ENCODE measurements at regions of chr3 and their contacts with region 1.

Region 1: GRCh38 chr3:156535162-156535627 is 19.7 kb downstream of the SSR3 start:
- DNase-seq: peak; percentile 94
- H3K4me3 ChIP-seq: no peak overlapping the region
- H3K27ac ChIP-seq: peak overlapping the region; percentile 71 to 93 (median 85)
- H3K4me1 ChIP-seq: peaks cover 0 to 85% (median 61%) of the 10 kb centered on the region in 4 donors
- H3K27me3 ChIP-seq: no peaks in the 10 kb centered on the region
- CTCF ChIP-seq: no peak
- EP300 ChIP-seq: peak in 3 of 4 donors; percentile 42 to 77 (median 61)
- POLR2A ChIP-seq: no peak

Region 2: GRCh38 chr3:157136647-157137387 is 601.6 kb after region 1 on chr3:
- intact Hi-C with region 1: loop called (anchors 5 kb)
- DNase-seq: no peak
- H3K4me3 ChIP-seq: no peak overlapping the region
- H3K27ac ChIP-seq: peak overlapping the region; percentile 31 to 75 (median 68)
- H3K4me1 ChIP-seq: peaks cover 0 to 40% (median 21%) of the 10 kb centered on the region in 4 donors
- H3K27me3 ChIP-seq: no peaks in the 10 kb centered on the region
- CTCF ChIP-seq: no peak
- EP300 ChIP-seq: no peak
- POLR2A ChIP-seq: no peak